MCF 10A (cell line): ENCODE measurements at regions of chr11 and their contacts with region 1.

Region 1: DNA sequence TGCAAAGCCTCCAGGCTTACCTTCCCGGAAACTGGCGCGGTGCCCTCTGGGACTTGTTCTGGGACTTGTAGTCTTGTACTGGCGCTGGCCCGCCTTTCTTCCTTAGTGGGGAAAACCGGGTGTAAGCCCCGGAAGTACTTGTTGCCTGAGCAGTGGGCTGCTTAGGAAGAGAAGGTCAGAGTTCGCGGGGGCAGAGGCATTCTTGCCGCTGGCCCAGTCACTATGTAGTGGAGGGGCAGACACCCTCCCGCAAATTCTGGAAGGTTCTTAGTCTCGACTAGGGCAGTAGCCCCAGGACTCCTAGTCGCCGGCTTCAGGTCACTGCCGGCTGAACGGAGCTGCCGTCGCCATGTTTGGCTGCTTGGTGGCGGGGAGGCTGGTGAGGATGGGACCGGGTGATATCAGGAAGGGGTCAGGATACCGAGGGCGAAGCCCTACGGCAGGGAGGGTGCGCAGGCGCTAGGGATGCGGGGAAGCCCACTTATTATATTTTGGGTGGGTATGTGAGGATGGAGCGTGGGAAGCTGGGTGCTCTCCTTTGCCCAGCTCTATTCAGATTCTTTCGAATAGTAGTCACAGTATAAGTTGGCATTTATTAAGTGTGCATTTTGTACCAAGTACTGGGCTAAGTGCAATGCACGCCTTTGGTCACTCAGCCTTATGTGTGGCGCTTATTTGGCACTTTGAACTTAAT is at the start of gene HIKESHI:
- DNase-seq: peak; percentile 99
- H3K4me3 Mint-ChIP-seq: peak within 1 kb of the TSS; percentile 99
- H3K27ac Mint-ChIP-seq: peak within 1 kb of the TSS; percentile 98
- H3K4me1 Mint-ChIP-seq: peaks cover 12% of the 10 kb centered on the region
- H3K27me3 Mint-ChIP-seq: no peaks in the 10 kb centered on the region
- CTCF ChIP-seq: no peak
- total RNA-seq, gene HIKESHI: 47.6 and 53.9 TPM in 2 replicates

Region 2: DNA sequence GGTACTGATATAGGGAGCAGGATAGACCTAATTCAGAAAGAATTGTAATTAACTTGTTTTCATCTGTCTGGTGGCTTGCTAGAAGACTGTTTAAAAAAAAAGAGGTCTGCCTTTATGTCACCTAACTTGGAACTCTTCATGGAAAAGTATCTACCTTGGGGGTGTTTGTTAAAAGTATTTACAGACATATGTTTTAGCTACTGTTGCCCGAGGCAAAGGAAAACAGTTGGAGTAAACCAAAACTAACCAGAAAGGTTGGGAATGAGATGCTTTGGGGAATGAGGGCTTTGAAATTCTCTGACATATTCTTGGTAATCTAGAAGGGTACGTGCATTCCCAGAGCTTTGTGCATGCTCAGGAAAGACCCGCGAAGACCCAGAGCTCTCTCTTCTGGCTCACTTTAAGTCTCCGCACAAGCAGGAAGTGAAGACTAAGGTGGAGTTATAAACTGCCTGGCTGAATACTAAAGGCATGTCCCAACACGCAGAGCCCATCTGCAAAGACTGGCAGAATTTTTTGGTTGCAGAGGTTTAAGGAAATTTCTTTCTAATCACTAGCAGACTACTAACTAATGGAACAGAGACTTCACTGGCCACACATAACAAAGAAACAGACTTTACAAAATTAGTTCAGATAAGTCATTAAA is 33.0 kb after region 1 on chr11:
- CTCF ChIA-PET with region 1: no interaction called
- POLR2A ChIA-PET with region 1: interaction called, 10 read pairs
- intact Hi-C with region 1: no loop called
- DNase-seq: peak; percentile 68
- H3K4me3 Mint-ChIP-seq: no peak overlapping the region
- H3K27ac Mint-ChIP-seq: peak overlapping the region; percentile 88
- H3K4me1 Mint-ChIP-seq: peaks cover 19% of the 10 kb centered on the region
- H3K27me3 Mint-ChIP-seq: no peaks in the 10 kb centered on the region
- CTCF ChIP-seq: no peak

Region 3: DNA sequence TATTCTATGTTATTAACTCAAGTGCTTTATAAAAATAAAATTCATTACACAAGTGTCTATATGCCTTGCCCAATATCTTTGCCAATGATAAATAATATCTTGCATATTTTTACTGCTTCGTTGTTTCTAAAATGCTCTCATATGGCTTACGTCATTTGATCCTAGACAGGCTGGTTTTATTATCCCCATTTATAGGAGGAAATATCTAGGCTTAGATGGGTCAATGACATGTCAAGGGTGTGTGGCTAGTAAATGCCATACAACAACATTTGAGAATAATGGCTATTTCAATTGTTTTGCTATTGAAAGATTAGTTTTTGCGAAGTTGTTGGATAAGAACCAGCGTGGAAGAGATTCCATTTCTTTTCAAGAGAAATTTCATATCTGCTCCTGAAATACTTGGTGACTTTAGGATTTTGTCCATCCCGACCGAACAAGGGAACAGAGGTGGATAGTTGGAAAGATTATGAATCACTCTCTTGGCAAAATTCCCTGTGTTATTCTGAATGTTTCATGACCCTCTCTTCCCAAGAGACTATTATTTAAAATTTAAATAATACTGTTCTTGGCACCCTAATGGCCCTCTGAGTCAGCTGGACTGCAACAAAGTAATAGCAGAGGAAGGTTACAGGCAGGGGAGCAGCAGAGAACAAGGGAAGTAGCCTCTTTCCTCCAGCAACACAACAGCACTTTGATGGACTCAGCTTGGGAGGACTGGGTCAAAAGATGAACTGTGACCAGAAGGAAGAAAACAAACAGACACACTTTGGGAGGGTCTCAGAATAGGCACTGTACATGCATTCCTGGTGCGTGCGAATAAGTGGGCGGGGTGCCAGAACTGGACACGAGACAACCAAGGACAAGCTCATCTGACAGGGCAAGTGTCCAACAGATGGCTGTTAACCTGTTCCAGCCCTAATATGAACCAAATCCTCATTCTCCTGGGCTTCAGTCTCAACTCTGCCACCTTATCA is 275.7 kb after region 1 on chr11:
- CTCF ChIA-PET with region 1: no interaction called
- POLR2A ChIA-PET with region 1: no interaction called
- intact Hi-C with region 1: no loop called
- DNase-seq: peak; percentile 92
- H3K4me3 Mint-ChIP-seq: peak overlapping the region; percentile 56
- H3K27ac Mint-ChIP-seq: no peak overlapping the region
- H3K4me1 Mint-ChIP-seq: peaks cover 22% of the 10 kb centered on the region
- H3K27me3 Mint-ChIP-seq: no peaks in the 10 kb centered on the region
- CTCF ChIP-seq: no peak